Activated CD4-positive, alpha-beta T cell treated with anti-CD3 and anti-CD28 coated beads, Interleukin-2, amount 10 ng/mL, durations not matched to agents 24 days and 14 days (primary cell): ENCODE measurements at regions of chr15 and their contacts with region 1.

Region 1: DNA sequence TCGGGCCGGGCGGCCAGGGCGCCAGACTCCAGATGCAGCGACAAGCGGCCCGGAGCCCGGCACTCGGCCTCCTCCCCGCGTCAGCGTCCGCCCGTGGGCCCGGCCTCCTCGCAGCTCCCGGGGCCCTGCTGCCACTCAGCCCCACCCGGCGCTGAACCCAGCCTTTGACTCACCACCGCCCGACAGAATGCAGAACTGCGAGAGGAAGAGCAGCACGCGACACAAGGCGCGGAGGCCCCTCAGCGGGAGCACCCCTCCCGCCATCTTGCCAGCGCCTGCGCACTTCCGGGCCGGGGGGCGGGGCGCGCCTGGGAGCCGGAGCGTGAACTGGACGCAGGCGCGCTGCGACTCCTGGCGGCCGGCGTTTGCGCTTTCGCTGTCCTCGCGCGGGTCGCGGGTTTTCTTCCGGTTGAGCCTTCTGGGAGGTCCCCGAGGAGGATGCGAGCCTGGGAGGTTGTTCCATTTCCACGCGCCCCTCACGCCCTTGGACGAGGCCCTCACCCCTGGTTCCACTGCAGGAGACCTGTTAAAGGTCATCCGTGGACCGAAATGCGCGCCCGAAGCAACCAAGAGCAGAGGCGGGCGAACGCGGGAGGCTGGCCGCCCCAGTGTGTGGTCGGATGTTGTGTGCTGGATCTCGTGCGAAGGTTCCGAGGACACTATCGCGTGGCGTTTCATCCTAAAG is at the start of gene TM2D3:
- DNase-seq: peak; percentile 99
- H3K4me3 Mint-ChIP-seq: peak within 1 kb of the TSS; percentile 86
- H3K27ac Mint-ChIP-seq: peak within 1 kb of the TSS; percentile 86
- H3K4me1 Mint-ChIP-seq: peaks cover 32% of the 10 kb centered on the region
- H3K27me3 Mint-ChIP-seq: no peaks in the 10 kb centered on the region
- total RNA-seq, gene TM2D3: 56.2 and 62.7 TPM in 2 replicates

Region 2: GRCh38 chr15:100602064-100602822 is 1050.0 kb before region 1 on chr15 and contains the starts of genes ASB7 and LINS1:
- intact Hi-C with region 1: loop called (anchors 5 kb)
- DNase-seq: peak; percentile 100
- H3K4me3 Mint-ChIP-seq: no peak within 1 kb of the TSS
- H3K27ac Mint-ChIP-seq: no peak within 1 kb of the TSS
- H3K4me1 Mint-ChIP-seq: peaks cover 54% of the 10 kb centered on the region
- H3K27me3 Mint-ChIP-seq: no peaks in the 10 kb centered on the region
- total RNA-seq, gene ASB7: 17.8 and 18.0 TPM in 2 replicates
- total RNA-seq, gene LINS1: 63.9 and 64.9 TPM in 2 replicates

Region 3: GRCh38 chr15:101008158-101009139 is 643.8 kb before region 1 on chr15:
- intact Hi-C with region 1: loop called (anchors 10 kb)
- DNase-seq: peak; percentile 96
- H3K4me3 Mint-ChIP-seq: peak overlapping the region; percentile 92
- H3K27ac Mint-ChIP-seq: no peak overlapping the region
- H3K4me1 Mint-ChIP-seq: peaks cover 14% of the 10 kb centered on the region
- H3K27me3 Mint-ChIP-seq: peaks cover 17% of the 10 kb centered on the region

Region 4: GRCh38 chr15:101242160-101242998 is 409.9 kb before region 1 on chr15:
- intact Hi-C with region 1: no loop called
- DNase-seq: peak; percentile 91
- H3K4me3 Mint-ChIP-seq: peak overlapping the region; percentile 70
- H3K27ac Mint-ChIP-seq: peak overlapping the region; percentile 90
- H3K4me1 Mint-ChIP-seq: peaks cover 83% of the 10 kb centered on the region
- H3K27me3 Mint-ChIP-seq: no peaks in the 10 kb centered on the region

Region 5: DNA sequence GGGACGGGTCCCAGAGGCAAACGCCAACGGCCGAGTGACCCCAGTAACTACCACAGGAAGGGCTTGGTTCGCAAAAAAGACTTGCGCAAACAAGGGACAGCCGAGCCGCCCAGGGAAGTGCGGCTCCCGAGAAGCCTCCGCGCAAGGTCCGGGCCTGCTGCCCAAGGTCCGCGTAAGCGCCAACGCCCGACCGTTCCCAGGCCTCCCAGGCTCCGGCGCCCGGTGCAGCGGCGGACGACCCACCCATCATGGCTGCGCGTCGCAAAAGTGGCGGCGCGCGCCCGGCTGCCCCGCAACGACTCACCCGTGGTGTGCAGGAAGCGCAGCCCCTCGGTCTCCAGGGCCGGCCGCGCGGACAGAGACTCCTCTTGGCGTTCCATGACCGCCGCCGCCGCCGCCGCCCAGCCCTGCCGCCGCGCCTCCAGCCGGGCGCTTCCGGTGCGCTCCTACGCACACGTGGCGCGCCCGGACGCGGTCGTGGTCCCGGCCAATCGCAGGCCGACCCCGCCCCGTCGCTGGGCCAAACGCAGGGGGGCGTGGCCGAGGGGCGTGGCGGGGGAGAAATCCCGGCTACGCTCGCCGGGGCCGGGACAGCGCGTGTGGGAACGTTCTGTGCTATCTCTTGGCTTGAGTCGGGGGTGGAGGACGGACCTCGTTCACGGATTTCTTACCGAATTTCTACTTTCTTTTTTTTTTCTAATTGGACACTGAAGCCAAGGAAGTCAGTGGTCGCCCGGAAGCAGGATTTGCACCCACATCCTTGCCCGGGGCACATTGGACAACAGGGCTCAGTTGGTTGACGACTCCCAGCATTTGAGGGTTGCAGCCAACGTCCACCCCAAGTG is 375.0 kb before region 1 on chr15 and contains the start of gene SELENOS:
- intact Hi-C with region 1: loop called (anchors 5 kb)
- DNase-seq: peak; percentile 98
- H3K4me3 Mint-ChIP-seq: peak within 1 kb of the TSS; percentile 92
- H3K27ac Mint-ChIP-seq: peak within 1 kb of the TSS; percentile 85
- H3K4me1 Mint-ChIP-seq: peaks cover 24% of the 10 kb centered on the region
- H3K27me3 Mint-ChIP-seq: no peaks in the 10 kb centered on the region
- total RNA-seq, gene SELENOS: 36.5 and 39.3 TPM in 2 replicates

Region 6: DNA sequence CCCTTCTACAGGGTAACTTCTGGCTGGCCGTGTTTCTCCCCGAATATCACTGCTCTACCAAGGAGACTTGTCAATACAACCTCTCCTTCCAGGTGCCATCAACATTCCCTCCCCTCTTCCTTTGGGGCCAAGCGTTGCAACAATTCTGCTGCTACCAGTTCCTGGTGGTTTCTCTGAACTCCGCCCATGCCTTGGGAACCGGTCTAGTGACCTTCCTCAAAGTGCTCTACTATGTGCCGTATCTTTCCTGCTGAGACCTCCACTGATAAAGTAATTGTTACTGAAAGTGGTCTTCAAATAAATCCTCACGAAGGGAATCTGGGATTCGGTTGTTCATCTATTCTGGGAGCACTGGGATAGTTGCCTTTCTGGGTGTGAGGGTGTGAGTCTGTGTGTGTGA is 189.0 kb before region 1 on chr15:
- intact Hi-C with region 1: loop called (anchors 5 kb)
- DNase-seq: no peak
- H3K4me3 Mint-ChIP-seq: no peak overlapping the region
- H3K27ac Mint-ChIP-seq: no peak overlapping the region
- H3K4me1 Mint-ChIP-seq: peaks cover 30% of the 10 kb centered on the region
- H3K27me3 Mint-ChIP-seq: no peaks in the 10 kb centered on the region

Region 7: GRCh38 chr15:101590783-101591182 is 61.5 kb before region 1 on chr15:
- intact Hi-C with region 1: no loop called
- DNase-seq: no peak
- H3K4me3 Mint-ChIP-seq: no peak overlapping the region
- H3K27ac Mint-ChIP-seq: no peak overlapping the region
- H3K4me1 Mint-ChIP-seq: no peaks in the 10 kb centered on the region
- H3K27me3 Mint-ChIP-seq: peaks cover 48% of the 10 kb centered on the region

Region 8: GRCh38 chr15:101692801-101693598 is 40.8 kb after region 1 on chr15:
- intact Hi-C with region 1: loop called (anchors 2 kb)
- DNase-seq: peak; percentile 74
- H3K4me3 Mint-ChIP-seq: peak overlapping the region; percentile 68
- H3K27ac Mint-ChIP-seq: peak overlapping the region; percentile 91
- H3K4me1 Mint-ChIP-seq: peaks cover 56% of the 10 kb centered on the region
- H3K27me3 Mint-ChIP-seq: no peaks in the 10 kb centered on the region

Region 9: GRCh38 chr15:101723874-101724674 is 71.8 kb after region 1 on chr15 and contains the start of gene TARS3:
- intact Hi-C with region 1: loop called (anchors 1 kb)
- DNase-seq: peak; percentile 95
- H3K4me3 Mint-ChIP-seq: peak within 1 kb of the TSS; percentile 87
- H3K27ac Mint-ChIP-seq: peak within 1 kb of the TSS; percentile 95
- H3K4me1 Mint-ChIP-seq: peaks cover 14% of the 10 kb centered on the region
- H3K27me3 Mint-ChIP-seq: no peaks in the 10 kb centered on the region
- total RNA-seq, gene TARS3: 11.5 and 13.2 TPM in 2 replicates